ENCODE measurements at regions of chr3 and their contacts with region 1.

Region 1: GRCh38 chr3:151918253-151919029 is 45.0 kb downstream of the SUCNR1 start:
- DNase-seq: no peak
- H3K4me3 Mint-ChIP-seq: no peak overlapping the region
- H3K27ac Mint-ChIP-seq: no peak overlapping the region
- H3K4me1 Mint-ChIP-seq: no peaks in the 10 kb centered on the region
- H3K27me3 Mint-ChIP-seq: no peaks in the 10 kb centered on the region

Region 2: DNA sequence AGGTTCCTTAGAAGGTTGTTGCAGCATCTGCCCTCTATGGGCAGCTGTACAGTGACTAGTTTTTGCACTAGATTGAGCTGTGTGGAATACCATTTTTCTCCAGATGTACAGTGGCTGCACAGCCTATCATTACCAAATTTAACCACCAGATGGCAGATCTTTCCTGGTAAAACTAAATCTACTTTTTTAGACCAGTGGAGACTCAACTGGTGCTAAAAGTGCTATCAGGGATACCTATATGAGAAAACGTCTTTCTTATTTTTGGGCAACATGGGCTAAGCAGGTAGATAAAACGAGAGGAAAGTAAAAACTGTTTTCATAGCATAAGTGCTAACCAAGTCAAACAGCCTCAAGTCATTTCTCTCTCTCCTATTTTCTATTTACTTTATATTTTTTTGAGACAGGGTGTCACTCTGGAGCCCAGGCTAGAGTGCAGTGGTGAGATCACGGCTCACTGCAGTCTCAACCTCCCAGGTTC is 478.8 kb before region 1 on chr3:
- CTCF ChIA-PET with region 1: interaction called, 13 read pairs
- POLR2A ChIA-PET with region 1: no interaction called
- intact Hi-C with region 1: loop called (anchors 1 kb)
- DNase-seq: no peak
- H3K4me3 Mint-ChIP-seq: no peak overlapping the region
- H3K27ac Mint-ChIP-seq: no peak overlapping the region
- H3K4me1 Mint-ChIP-seq: no peaks in the 10 kb centered on the region
- H3K27me3 Mint-ChIP-seq: no peaks in the 10 kb centered on the region

Region 3: GRCh38 chr3:151468284-151468917 is 450.0 kb before region 1 on chr3:
- CTCF ChIA-PET with region 1: interaction called, 17 read pairs
- POLR2A ChIA-PET with region 1: no interaction called
- intact Hi-C with region 1: loop called (anchors 1 kb)
- DNase-seq: no peak
- H3K4me3 Mint-ChIP-seq: no peak overlapping the region
- H3K27ac Mint-ChIP-seq: no peak overlapping the region
- H3K4me1 Mint-ChIP-seq: no peaks in the 10 kb centered on the region
- H3K27me3 Mint-ChIP-seq: peaks cover 5% of the 10 kb centered on the region

Region 4: GRCh38 chr3:151864423-151865101 is 53.9 kb before region 1 on chr3:
- CTCF ChIA-PET with region 1: no interaction called
- POLR2A ChIA-PET with region 1: no interaction called
- intact Hi-C with region 1: no loop called
- DNase-seq: no peak
- H3K4me3 Mint-ChIP-seq: no peak overlapping the region
- H3K27ac Mint-ChIP-seq: no peak overlapping the region
- H3K4me1 Mint-ChIP-seq: no peaks in the 10 kb centered on the region
- H3K27me3 Mint-ChIP-seq: no peaks in the 10 kb centered on the region

Region 5: GRCh38 chr3:151903501-151903991 is 14.9 kb before region 1 on chr3:
- CTCF ChIA-PET with region 1: no interaction called
- POLR2A ChIA-PET with region 1: no interaction called
- intact Hi-C with region 1: no loop called
- DNase-seq: no peak
- H3K4me3 Mint-ChIP-seq: no peak overlapping the region
- H3K27ac Mint-ChIP-seq: no peak overlapping the region
- H3K4me1 Mint-ChIP-seq: peaks cover 8% of the 10 kb centered on the region
- H3K27me3 Mint-ChIP-seq: no peaks in the 10 kb centered on the region

Region 6: DNA sequence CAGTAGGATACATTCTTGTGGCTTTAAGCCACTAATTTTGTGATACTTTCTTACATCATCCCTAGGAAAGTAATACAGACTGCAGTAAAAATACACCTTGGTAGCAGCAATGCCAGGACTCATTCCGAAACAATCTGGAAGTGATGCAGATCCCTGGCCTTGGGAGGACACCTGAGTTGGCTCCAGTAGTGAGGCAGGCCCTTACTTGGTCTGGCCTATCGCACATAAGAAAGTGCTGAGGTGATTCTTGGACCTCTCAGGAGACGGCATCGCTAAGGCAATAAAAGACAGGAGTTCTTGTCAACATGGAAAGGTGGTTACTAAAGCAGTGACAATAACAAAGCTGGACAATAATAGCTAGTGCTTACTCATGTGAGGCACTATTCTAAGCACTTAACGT is 81.5 kb after region 1 on chr3:
- CTCF ChIA-PET with region 1: no interaction called
- POLR2A ChIA-PET with region 1: no interaction called
- intact Hi-C with region 1: no loop called
- DNase-seq: no peak
- H3K4me3 Mint-ChIP-seq: no peak overlapping the region
- H3K27ac Mint-ChIP-seq: no peak overlapping the region
- H3K4me1 Mint-ChIP-seq: no peaks in the 10 kb centered on the region
- H3K27me3 Mint-ChIP-seq: peaks cover 2% of the 10 kb centered on the region

Region 7: GRCh38 chr3:152113413-152113812 is 195.0 kb after region 1 on chr3:
- CTCF ChIA-PET with region 1: no interaction called
- POLR2A ChIA-PET with region 1: no interaction called
- intact Hi-C with region 1: no loop called
- DNase-seq: no peak
- H3K4me3 Mint-ChIP-seq: no peak overlapping the region
- H3K27ac Mint-ChIP-seq: no peak overlapping the region
- H3K4me1 Mint-ChIP-seq: no peaks in the 10 kb centered on the region
- H3K27me3 Mint-ChIP-seq: no peaks in the 10 kb centered on the region

Measured in activated CD4-positive, alpha-beta memory T cell treated with anti-CD3 and anti-CD28 coated beads for 36 hours (primary cell).